RWPE1 (cell line): ENCODE measurements at regions of chr12 and their contacts with region 1.

Region 1: DNA sequence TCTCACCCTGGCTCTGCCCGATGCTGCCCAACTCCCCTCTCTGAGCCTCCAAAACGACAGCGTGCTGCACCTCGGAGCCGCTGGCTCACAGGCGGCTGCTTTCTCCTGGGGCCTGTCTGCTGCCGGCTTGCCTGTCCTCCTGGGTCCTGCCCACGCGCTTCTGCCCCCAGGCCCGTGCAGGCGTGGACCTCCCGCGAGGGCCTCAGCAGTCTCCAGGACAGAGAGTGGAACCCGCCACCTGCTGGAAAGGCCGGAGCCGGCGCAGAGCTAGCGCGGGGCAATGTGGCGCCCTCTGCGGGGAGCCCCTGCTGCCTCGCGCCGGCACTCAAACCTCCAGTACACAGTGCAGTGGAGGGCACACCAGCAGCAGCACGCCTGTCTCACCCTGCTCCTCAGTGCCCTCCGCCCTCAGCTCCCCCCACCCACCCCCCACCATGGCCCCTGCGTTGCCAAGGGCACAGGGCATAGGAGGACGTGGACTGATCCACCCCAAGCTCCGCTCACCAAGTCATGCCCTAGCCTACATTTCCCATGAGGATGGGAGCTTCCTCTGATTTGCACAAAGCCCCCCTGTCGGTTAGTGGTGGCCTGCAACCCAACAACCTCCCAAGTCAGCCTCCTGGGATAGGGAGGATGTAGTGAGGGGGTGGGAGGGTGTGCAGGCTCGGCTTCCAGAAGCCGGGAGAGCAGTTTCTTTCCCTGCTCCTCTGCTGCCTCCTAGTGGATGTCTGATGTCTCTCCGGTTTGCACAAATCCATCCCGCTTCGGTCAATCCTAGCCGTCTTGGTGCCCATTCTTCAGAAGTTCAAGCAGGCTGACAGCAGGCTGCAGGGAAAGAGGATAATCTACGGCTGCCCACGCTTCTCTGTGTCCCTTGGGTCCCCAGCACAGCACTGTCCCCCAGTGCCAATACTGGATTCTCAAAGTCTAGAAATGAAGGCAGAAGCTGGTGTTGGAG is 25.2 kb downstream of the KRT8 start:
- DNase-seq: peak; percentile 78
- H3K27ac ChIP-seq: peak overlapping the region; percentile 100
- CTCF ChIP-seq: peak; percentile 82

Region 2: GRCh38 chr12:52156736-52157565 is 722.7 kb before region 1 on chr12:
- CTCF ChIA-PET with region 1: interaction called, 10 read pairs
- POLR2A ChIA-PET with region 1: interaction called, 3 read pairs
- DNase-seq: peak; percentile 75
- H3K27ac ChIP-seq: peak overlapping the region; percentile 100
- CTCF ChIP-seq: peak; percentile 90

Region 3: DNA sequence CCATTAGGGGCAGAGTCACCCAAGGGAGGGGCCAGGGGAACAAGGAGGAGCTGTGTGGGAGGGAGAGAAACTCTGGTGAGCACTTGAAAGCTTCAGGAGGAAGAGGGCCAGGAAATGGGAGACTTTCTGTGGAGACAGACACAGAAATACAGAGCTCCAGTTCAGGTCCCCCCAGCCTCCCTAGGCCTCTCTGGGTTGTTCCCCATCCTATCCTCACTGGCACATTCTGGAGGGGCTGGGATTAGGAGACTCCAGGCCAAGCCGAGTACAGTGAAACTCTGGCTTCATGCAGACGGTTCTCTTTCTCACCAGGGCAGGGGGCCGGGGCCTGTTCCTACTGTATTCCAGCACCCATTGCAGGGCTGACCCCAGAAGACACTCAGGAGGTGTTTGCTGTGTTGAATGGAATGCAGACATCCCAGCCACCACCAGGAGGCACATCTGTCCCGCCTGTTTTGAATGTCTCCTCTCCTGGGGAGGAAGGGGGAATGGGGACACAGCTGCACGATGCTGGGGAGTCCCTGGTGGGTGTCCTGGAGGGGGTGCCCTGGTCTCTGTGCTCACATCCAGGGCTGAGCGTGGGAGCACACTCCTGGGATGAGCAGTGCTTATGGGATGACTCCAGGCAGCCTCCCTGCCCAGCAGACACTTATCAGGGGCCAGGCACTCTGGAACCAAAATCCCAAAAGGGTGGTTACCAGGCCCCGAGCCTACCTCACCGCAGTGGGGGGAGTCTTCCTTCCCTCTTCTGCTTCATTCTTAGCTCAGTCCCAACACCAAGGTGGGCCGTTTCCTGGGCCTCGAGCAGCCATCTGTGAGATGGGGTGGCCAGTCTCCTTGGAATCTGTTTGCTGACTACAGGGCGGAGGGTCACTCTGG is 488.7 kb before region 1 on chr12:
- CTCF ChIA-PET with region 1: interaction called, 11 read pairs
- POLR2A ChIA-PET with region 1: no interaction called
- DNase-seq: no peak
- H3K27ac ChIP-seq: peak overlapping the region; percentile 66
- CTCF ChIP-seq: no peak; the same call in 1 of the 2 replicates

Region 4: DNA sequence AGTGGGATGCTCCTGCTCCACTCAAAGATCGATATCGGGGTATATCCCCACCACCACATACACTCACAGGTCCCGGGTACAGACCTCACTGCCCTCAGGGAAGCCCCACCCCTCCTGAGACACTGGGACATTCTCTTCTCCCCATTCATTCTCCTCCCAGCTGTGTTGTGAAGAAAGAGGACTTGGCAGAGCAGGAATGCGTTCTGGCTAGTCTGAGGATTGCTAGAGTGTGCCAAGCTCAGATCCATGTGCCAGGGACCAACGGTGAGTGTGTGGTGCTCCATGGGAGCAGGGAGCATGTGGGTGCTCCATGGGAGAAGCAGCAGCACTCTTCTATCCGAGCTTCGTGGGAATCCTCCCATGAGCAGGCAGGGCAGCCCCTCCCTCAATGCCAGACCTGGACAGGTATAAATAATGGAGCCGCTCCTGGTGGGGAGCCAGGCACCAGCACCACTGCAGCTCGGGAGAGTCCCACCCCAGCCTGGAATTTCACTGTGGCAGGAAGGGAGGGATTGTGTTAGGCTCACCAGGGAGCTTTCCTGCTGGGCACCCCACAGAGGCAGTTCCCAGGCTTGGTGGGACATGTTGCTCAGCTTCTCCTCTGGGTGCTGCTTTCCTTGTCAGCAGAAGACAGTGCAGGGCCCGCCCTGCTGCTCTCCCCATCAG is 357.2 kb before region 1 on chr12:
- CTCF ChIA-PET with region 1: interaction called, 38 read pairs
- POLR2A ChIA-PET with region 1: interaction called, 5 read pairs
- DNase-seq: peak; percentile 63
- H3K27ac ChIP-seq: peak overlapping the region; percentile 100
- CTCF ChIP-seq: no peak

Region 5: GRCh38 chr12:52980693-52981423 is 101.2 kb after region 1 on chr12:
- CTCF ChIA-PET with region 1: interaction called, 165 read pairs
- POLR2A ChIA-PET with region 1: interaction called, 6 read pairs
- DNase-seq: peak; percentile 89
- H3K27ac ChIP-seq: 0 out of 2 replicates have a peak overlapping the region, but pooled peaks have one; percentile 32
- CTCF ChIP-seq: peak; percentile 97